GM12878 (cell line): ENCODE measurements at regions of chr5 and their contacts with region 1.

Region 1: DNA sequence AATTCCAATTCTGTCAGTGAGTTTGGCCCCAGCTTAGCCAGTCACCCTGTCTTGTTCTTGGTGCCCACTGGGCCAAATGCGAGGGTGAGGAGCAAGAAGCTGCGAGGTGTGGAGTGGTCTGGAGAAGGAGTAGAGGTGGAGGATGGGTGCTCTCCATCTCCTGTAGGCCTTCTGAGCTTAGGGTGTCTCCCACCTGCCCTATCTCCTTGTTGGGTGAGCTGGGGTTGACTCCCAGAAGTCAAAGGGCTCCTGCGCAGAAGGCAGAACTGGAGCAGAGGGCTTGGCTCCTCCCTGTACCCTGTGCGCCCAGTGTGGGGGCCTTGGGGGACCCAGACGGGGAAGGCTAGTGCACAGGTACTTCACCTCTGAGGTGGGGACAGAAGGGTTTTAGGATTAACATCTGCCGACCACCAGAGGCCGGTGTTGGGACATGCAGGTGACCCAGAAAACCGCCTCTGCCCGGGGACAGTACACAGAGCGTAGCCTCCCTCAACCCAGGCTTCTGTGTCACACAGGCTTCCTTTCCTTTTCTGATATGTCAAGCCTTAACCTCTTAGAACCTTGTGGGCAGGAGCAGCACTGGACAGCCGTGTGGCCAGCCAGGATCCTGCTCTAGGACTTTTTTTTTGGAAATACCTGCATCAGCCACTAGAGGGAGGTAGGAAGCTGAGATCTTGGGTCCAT is 16.9 kb downstream of the IL5 start:
- DNase-seq: peak; percentile 53
- ATAC-seq: peak; percentile 73
- H3K4me3 ChIP-seq: no peak overlapping the region
- H3K27ac ChIP-seq: peak overlapping the region; percentile 84; the same call in 1 of the 2 replicates
- H3K4me1 ChIP-seq: peaks cover 32% of the 10 kb centered on the region
- H3K27me3 ChIP-seq: no peaks in the 10 kb centered on the region
- CTCF ChIP-seq: peak; percentile 57 to 87 (median 76); a peak in 5 of 6 replicates
- EP300 ChIP-seq: no peak
- POLR2A ChIP-seq: no peak
- RAD21 ChIP-seq: peak; percentile 80

Region 2: DNA sequence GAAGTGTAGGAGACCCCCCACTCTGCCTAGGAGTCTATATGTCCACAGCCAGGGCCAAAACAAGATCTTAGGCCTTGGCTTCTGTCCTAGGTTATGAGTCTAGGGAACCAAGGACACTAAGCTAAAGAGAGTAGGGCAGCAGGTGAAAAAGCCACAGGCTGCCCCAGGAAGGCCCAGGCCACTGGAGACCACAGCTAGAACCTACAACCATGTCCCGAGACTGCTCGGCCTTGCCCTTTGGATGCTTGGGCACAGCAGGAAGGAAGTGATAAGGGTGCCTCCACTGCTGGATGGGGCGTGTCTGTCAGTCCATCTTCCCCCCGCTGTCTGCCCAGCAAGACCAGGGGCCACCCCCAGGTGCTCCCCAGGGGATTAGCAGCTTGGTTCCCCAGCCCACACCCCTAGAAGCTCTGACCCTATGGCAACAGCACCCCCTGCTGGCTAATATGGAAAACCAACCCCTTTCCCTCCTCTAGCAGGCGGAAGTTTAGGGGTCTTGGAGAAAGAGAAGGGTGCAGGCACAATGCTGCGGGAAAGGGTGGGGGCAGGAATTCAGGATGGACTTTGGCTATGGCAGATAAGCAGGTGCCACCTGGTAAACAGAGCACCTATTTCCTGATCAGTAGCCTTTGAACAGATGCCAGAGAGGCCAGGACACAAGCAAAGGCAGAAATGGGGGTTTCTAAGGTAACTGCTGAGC is 25.4 kb before region 1 on chr5:
- CTCF ChIA-PET with region 1: interaction called, 29 read pairs
- POLR2A ChIA-PET with region 1: interaction called, 11 read pairs
- RAD21 ChIA-PET with region 1: interaction called, 29 read pairs
- SMC1A ChIA-PET with region 1: interaction called, 32 read pairs
- in situ Hi-C with region 1: no loop called
- intact Hi-C with region 1: loop called (anchors 1 kb)
- DNase-seq: no peak
- ATAC-seq: peak; percentile 55
- H3K4me3 ChIP-seq: no peak overlapping the region
- H3K27ac ChIP-seq: peak overlapping the region; percentile 42; the same call in 1 of the 2 replicates
- H3K4me1 ChIP-seq: peaks cover 34% of the 10 kb centered on the region
- H3K27me3 ChIP-seq: no peaks in the 10 kb centered on the region
- CTCF ChIP-seq: peak; percentile 80 to 94 (median 85); a peak in 5 of 6 replicates
- EP300 ChIP-seq: 0 out of 4 replicates have a peak, but pooled peaks of 1 of the 2 experiments have one; percentile 11
- POLR2A ChIP-seq: no peak
- RAD21 ChIP-seq: peak; percentile 100

Region 3: DNA sequence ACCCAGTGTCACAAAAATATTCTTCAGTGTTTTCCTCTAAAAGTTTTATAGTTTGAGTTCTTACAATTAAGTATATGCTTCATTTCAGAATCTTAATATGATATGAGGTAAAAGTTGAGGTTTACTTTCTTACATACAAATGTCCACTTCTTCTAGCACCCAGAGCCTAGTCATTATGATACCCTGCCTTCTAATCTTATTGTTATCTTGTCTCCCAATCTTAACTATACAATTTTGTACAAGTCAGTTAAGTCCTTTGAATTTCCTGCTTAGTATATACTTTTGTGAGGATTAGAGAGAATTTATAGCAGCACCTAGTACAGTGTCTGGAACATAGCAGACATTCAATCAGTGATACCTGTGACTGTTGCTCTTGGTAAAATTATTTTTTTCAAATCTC is 59.6 kb after region 1 on chr5:
- CTCF ChIA-PET with region 1: interaction called, 10 read pairs
- POLR2A ChIA-PET with region 1: no interaction called
- RAD21 ChIA-PET with region 1: interaction called, 5 read pairs
- SMC1A ChIA-PET with region 1: interaction called, 3 read pairs
- in situ Hi-C with region 1: no loop called
- intact Hi-C with region 1: loop called (anchors 5 kb)
- DNase-seq: no peak
- ATAC-seq: no peak
- H3K4me3 ChIP-seq: no peak overlapping the region
- H3K27ac ChIP-seq: no peak overlapping the region
- H3K4me1 ChIP-seq: no peaks in the 10 kb centered on the region
- H3K27me3 ChIP-seq: no peaks in the 10 kb centered on the region
- CTCF ChIP-seq: no peak
- EP300 ChIP-seq: no peak
- POLR2A ChIP-seq: no peak
- RAD21 ChIP-seq: no peak

Region 4: DNA sequence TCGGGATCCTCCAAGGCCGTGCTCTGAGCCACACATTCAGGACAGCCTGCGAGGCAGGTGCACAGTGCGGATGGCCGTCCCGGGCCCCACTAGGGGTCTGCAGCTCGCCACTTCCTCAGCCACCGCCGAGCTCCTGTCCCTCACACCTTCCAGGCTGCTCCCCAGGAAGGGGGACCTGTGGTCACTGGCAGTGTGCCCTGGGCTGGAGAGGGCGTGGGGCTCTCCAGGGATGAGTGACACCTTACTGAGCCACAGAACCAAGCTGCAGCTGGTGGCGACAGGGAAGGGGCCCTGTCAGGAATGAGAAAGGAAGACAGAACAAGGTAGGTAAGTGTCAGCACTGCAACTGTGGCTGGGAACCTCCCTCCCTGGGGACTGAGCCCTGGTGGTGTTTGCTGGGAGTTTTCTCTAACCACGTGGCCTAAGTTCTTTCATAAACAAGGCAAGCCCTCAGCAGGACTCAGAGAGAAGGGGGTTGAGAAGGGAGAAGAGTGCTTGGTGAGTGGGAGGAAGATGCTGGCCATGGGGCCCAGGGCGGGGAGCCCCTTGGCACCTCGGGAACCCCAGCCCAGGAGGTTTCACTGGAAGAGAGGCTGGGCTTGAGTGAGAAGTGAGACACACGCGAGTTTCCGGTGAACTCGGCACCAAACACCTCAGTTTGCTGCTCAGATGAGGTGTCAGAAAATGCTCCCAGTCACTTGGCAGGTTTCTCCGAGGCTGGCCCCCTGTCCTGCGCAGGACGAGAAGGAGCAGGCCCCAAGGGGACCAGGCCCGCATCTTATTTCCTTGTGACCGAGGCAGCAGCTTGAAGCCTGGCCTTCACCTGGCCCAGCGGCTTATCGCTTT is 136.7 kb after region 1 on chr5:
- CTCF ChIA-PET with region 1: interaction called, 28 read pairs
- POLR2A ChIA-PET with region 1: interaction called, 3 read pairs
- RAD21 ChIA-PET with region 1: interaction called, 10 read pairs
- SMC1A ChIA-PET with region 1: interaction called, 31 read pairs
- in situ Hi-C with region 1: no loop called
- intact Hi-C with region 1: loop called (anchors 5 kb)
- DNase-seq: peak; percentile 99
- ATAC-seq: peak; percentile 72
- H3K4me3 ChIP-seq: no peak overlapping the region
- H3K27ac ChIP-seq: peak overlapping the region; percentile 96
- H3K4me1 ChIP-seq: peaks cover 61% of the 10 kb centered on the region
- H3K27me3 ChIP-seq: no peaks in the 10 kb centered on the region
- CTCF ChIP-seq: 0 out of 6 replicates have a peak, but pooled peaks of 2 of the 3 experiments have one; percentile 1 to 2
- EP300 ChIP-seq: peak; percentile 85 to 90; a peak in 3 of 4 replicates
- POLR2A ChIP-seq: peak; percentile 65; the same call in 1 of the 2 replicates
- RAD21 ChIP-seq: peak; percentile 18; the same call in 1 of the 2 replicates

Region 5: GRCh38 chr5:132753135-132753987 is 226.9 kb after region 1 on chr5:
- CTCF ChIA-PET with region 1: interaction called, 15 read pairs
- POLR2A ChIA-PET with region 1: interaction called, 8 read pairs
- RAD21 ChIA-PET with region 1: interaction called, 6 read pairs
- SMC1A ChIA-PET with region 1: interaction called, 5 read pairs
- in situ Hi-C with region 1: no loop called
- intact Hi-C with region 1: loop called (anchors 5 kb)
- DNase-seq: no peak
- ATAC-seq: peak; percentile 42
- H3K4me3 ChIP-seq: no peak overlapping the region
- H3K27ac ChIP-seq: no peak overlapping the region
- H3K4me1 ChIP-seq: peaks cover 25% of the 10 kb centered on the region
- H3K27me3 ChIP-seq: no peaks in the 10 kb centered on the region
- CTCF ChIP-seq: peak; percentile 6 to 44 (median 15); a peak in 3 of 6 replicates
- EP300 ChIP-seq: no peak
- POLR2A ChIP-seq: no peak
- RAD21 ChIP-seq: peak; percentile 27; the same call in 1 of the 2 replicates

Region 6: GRCh38 chr5:132829742-132830435 is 303.5 kb after region 1 on chr5:
- CTCF ChIA-PET with region 1: interaction called, 10 read pairs
- POLR2A ChIA-PET with region 1: no interaction called
- RAD21 ChIA-PET with region 1: no interaction called
- SMC1A ChIA-PET with region 1: interaction called, 6 read pairs
- in situ Hi-C with region 1: loop called (anchors 10 kb)
- intact Hi-C with region 1: no loop called
- DNase-seq: no peak
- ATAC-seq: peak; percentile 90
- H3K4me3 ChIP-seq: peak overlapping the region; percentile 59
- H3K27ac ChIP-seq: peak overlapping the region; percentile 18; the same call in 1 of the 2 replicates
- H3K4me1 ChIP-seq: no peaks in the 10 kb centered on the region; the same call in 1 of the 2 replicates
- H3K27me3 ChIP-seq: peaks cover 0 to 2% of the 10 kb centered on the region in 2 experiments; a peak in 2 of 4 replicates
- CTCF ChIP-seq: peak; percentile 84 to 94 (median 89)
- EP300 ChIP-seq: 0 out of 4 replicates have a peak, but pooled peaks of 1 of the 2 experiments have one; percentile 9
- POLR2A ChIP-seq: peak; percentile 67
- RAD21 ChIP-seq: peak; percentile 73